ENCODE measurements at regions of chr11 and their contacts with region 1.

Region 1: GRCh38 chr11:88552377-88553062 is 215.0 kb upstream of the CTSC start:
- ATAC-seq: peak in 5 of 8 experiments; percentile 34 to 90 (median 68)
- H3K4me3 ChIP-seq: no peak overlapping the region
- H3K27ac ChIP-seq: no peak overlapping the region
- H3K4me1 ChIP-seq: no peaks in the 10 kb centered on the region

Region 2: GRCh38 chr11:88886796-88887195 is 334.3 kb after region 1 on chr11:
- in situ Hi-C with region 1: loop called in 1 of 9 experiments (anchors 25 kb)
- ATAC-seq: peak in 4 of 8 experiments; percentile 32 to 89 (median 56)
- H3K4me3 ChIP-seq: no peak overlapping the region
- H3K27ac ChIP-seq: no peak overlapping the region
- H3K4me1 ChIP-seq: no peaks in the 10 kb centered on the region